ENCODE measurements at regions of chr2 and their contacts with region 1.

Region 1: GRCh38 chr2:105789745-105790460 is 45.2 kb downstream of the NCK2 start:
- DNase-seq: peak; percentile 64
- H3K4me3 ChIP-seq: no peak overlapping the region
- H3K27ac ChIP-seq: peak overlapping the region; percentile 35
- H3K4me1 ChIP-seq: peaks cover 40% of the 10 kb centered on the region
- H3K27me3 ChIP-seq: no peaks in the 10 kb centered on the region
- CTCF ChIP-seq: peak in 1 of 2 donors; percentile 14

Region 2: GRCh38 chr2:105812180-105813044 is 22.5 kb after region 1 on chr2:
- CTCF ChIA-PET with region 1: no interaction called
- dilution Hi-C with region 1: no loop called
- in situ Hi-C with region 1: no loop called
- intact Hi-C with region 1: no loop called
- DNase-seq: peak; percentile 96
- H3K4me3 ChIP-seq: no peak overlapping the region
- H3K27ac ChIP-seq: peak overlapping the region; percentile 89
- H3K4me1 ChIP-seq: peaks cover 38% of the 10 kb centered on the region
- H3K27me3 ChIP-seq: no peaks in the 10 kb centered on the region
- CTCF ChIP-seq: no peak

Region 3: DNA sequence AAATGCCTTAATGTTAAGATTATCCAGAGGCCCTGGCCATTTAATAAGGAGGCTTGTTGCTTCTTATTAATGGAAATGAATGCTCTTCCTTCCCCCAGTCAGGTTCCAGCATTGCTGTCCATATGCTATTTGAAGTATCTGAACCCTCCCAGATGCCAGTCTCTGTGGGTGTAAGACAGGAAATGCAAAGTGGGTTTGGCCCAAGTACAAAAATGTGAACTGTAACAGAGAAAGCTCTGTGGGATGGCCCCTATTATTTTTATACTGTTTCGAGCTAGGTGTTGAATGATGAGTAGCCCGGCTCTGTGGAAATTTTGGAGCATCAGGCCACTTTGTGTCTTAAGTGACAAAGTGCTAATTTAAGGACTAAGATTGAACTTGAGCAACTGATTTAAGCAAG is 263.2 kb after region 1 on chr2:
- CTCF ChIA-PET with region 1: no interaction called
- dilution Hi-C with region 1: no loop called
- in situ Hi-C with region 1: no loop called
- intact Hi-C with region 1: loop called (anchors 1 kb)
- DNase-seq: peak; percentile 80
- H3K4me3 ChIP-seq: no peak overlapping the region
- H3K27ac ChIP-seq: peak overlapping the region; percentile 40
- H3K4me1 ChIP-seq: peaks cover 37% of the 10 kb centered on the region
- H3K27me3 ChIP-seq: no peaks in the 10 kb centered on the region
- CTCF ChIP-seq: no peak